Dendritic cell treated with granulocyte-macrophage colony-stimulating factor and Interleukin-4, amounts not matched to agents 40 ng/mL and 50 ng/mL, for 4 days (primary cell): ENCODE measurements at regions of chr5 and their contacts with region 1.

Region 1: GRCh38 chr5:154610321-154611154 is 132.5 kb upstream of the HAND1 start:
- H3K4me3 Mint-ChIP-seq: peak overlapping the region; percentile 43
- H3K27ac Mint-ChIP-seq: no peak overlapping the region
- H3K4me1 Mint-ChIP-seq: peaks cover 12% of the 10 kb centered on the region
- H3K27me3 Mint-ChIP-seq: peaks cover 73% of the 10 kb centered on the region

Region 2: GRCh38 chr5:154467655-154468354 is 142.7 kb before region 1 on chr5:
- intact Hi-C with region 1: loop called (anchors 1 kb)
- H3K4me3 Mint-ChIP-seq: no peak overlapping the region
- H3K27ac Mint-ChIP-seq: no peak overlapping the region
- H3K4me1 Mint-ChIP-seq: no peaks in the 10 kb centered on the region
- H3K27me3 Mint-ChIP-seq: peaks cover 39% of the 10 kb centered on the region

Region 3: DNA sequence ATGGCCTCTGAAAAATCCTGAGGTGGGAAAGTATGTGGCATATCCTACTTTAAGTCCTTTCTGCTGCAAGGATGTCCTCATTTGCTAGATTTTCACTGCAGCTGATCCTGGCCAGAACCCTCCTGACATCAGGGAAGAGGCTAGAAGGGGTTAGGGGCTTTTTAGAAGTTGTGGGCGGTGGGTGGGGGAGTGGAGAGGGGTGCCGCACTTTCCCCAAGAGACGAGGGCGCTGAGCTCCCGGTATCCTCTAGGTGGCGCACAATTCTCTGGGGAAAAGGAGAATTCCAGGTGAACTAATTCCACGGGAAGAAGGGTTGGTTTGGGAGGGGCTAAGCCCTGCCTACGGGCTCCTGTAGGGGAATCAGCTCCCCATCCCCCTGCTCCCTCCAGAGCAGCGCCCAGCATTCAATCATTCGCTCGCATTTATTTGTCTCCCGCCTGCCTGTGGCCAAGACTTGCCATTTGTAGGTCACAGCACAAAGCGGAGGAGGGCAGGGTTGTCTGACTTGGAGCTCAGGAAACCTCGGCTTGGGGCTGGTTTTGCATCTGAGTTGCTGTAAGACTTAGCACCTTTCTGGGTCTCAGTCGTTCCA is 89.6 kb before region 1 on chr5:
- intact Hi-C with region 1: loop called (anchors 2 kb)
- H3K4me3 Mint-ChIP-seq: no peak overlapping the region
- H3K27ac Mint-ChIP-seq: no peak overlapping the region
- H3K4me1 Mint-ChIP-seq: no peaks in the 10 kb centered on the region
- H3K27me3 Mint-ChIP-seq: peaks cover 30% of the 10 kb centered on the region

Region 4: GRCh38 chr5:154534457-154535050 is 76.0 kb before region 1 on chr5:
- intact Hi-C with region 1: no loop called
- H3K4me3 Mint-ChIP-seq: no peak overlapping the region
- H3K27ac Mint-ChIP-seq: no peak overlapping the region
- H3K4me1 Mint-ChIP-seq: no peaks in the 10 kb centered on the region
- H3K27me3 Mint-ChIP-seq: peaks cover 10% of the 10 kb centered on the region